ENCODE measurements at regions of chr21 and their contacts with region 1.

Region 1: GRCh38 chr21:37463083-37463801 is 96.7 kb downstream of the DYRK1A start:
- DNase-seq: peak; percentile 40 to 51 (median 47)
- H3K4me3 ChIP-seq: peak overlapping the region in 1 of 2 donors; percentile 8
- H3K4me3 Mint-ChIP-seq: peak overlapping the region; percentile 6 to 79 (median 56)
- H3K27ac ChIP-seq: no peak overlapping the region
- H3K27ac Mint-ChIP-seq: peak overlapping the region in 6 of 7 donors; percentile 60 to 94 (median 78)
- H3K4me1 ChIP-seq: peaks cover 65% of the 10 kb centered on the region
- H3K4me1 Mint-ChIP-seq: peaks cover 58 to 87% (median 74%) of the 10 kb centered on the region in 4 donors
- H3K27me3 ChIP-seq: no peaks in the 10 kb centered on the region
- H3K27me3 Mint-ChIP-seq: no peaks in the 10 kb centered on the region

Region 2: GRCh38 chr21:37220981-37221664 is 242.1 kb before region 1 on chr21:
- CTCF ChIA-PET with region 1: interaction called, 3 read pairs
- POLR2A ChIA-PET with region 1: no interaction called
- intact Hi-C with region 1: loop called (anchors 5 kb)
- DNase-seq: peak; percentile 86 to 95 (median 88)
- H3K4me3 ChIP-seq: peak overlapping the region; percentile 76 to 86
- H3K4me3 Mint-ChIP-seq: peak overlapping the region; percentile 79 to 96 (median 92)
- H3K27ac ChIP-seq: peak overlapping the region; percentile 75
- H3K27ac Mint-ChIP-seq: peak overlapping the region; percentile 80 to 96 (median 94)
- H3K4me1 ChIP-seq: peaks cover 45% of the 10 kb centered on the region
- H3K4me1 Mint-ChIP-seq: peaks cover 29 to 51% (median 36%) of the 10 kb centered on the region in 4 donors
- H3K27me3 ChIP-seq: no peaks in the 10 kb centered on the region
- H3K27me3 Mint-ChIP-seq: no peaks in the 10 kb centered on the region

Region 3: DNA sequence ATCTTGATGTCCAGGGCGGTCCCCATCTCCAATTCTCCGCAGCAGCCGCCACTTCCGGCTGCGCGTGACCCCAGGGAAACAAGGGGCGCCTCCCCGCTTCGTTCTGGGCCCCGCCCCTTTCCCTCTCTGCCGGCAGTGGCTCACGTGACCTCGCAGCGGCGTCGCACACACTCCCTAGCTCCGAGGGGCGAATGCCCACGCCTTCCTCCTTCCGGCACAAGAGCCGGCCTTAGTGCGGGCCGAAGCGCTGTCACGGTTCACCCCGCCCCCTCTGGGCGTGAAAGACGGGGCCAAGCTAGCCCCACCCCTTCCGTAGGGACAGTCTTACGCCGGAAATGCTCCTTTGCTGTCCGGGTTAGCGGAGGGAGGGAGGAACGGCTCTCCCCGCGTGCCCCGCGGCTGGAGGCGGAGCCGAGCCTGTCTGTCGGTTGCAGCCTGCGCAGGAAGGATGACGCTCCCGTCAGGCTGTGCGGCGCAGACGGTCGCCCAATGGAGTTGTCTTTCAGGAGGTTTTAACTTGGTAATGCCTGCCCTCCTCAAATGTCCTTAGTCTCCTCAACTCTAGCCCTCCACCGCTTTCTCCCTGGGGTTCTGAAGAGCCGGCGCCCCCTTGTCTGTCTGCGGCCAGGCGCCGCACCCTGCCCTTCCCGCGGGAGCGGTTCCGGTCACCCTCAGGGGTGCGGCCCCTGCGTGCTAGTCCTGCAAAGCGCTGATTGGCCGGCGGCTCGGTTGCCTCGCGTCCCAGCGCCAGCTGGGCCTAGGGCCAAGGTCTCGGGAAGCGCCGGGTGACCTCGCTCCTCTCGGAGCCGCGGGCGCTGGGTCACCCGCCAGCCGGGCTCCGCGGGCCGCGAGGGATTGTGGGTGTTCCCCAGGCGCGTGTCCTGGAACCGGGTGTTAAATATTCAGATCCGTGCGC is 195.7 kb before region 1 on chr21 and contains the start of gene VPS26C:
- CTCF ChIA-PET with region 1: no interaction called
- POLR2A ChIA-PET with region 1: interaction called, 4 read pairs
- intact Hi-C with region 1: loop called (anchors 5 kb)
- DNase-seq: peak; percentile 97 to 99 (median 99)
- H3K4me3 ChIP-seq: peak within 1 kb of the TSS; percentile 80 to 83
- H3K4me3 Mint-ChIP-seq: peak within 1 kb of the TSS; percentile 92 to 96 (median 94)
- H3K27ac ChIP-seq: peak within 1 kb of the TSS; percentile 92
- H3K27ac Mint-ChIP-seq: peak within 1 kb of the TSS; percentile 97 to 99 (median 98)
- H3K4me1 ChIP-seq: peaks cover 43% of the 10 kb centered on the region
- H3K4me1 Mint-ChIP-seq: peaks cover 33 to 64% (median 44%) of the 10 kb centered on the region in 4 donors
- H3K27me3 ChIP-seq: no peaks in the 10 kb centered on the region
- H3K27me3 Mint-ChIP-seq: peaks cover 0 to 4% of the 10 kb centered on the region in 2 donors
- total RNA-seq, gene VPS26C: 76.0 to 79.7 TPM

Region 4: DNA sequence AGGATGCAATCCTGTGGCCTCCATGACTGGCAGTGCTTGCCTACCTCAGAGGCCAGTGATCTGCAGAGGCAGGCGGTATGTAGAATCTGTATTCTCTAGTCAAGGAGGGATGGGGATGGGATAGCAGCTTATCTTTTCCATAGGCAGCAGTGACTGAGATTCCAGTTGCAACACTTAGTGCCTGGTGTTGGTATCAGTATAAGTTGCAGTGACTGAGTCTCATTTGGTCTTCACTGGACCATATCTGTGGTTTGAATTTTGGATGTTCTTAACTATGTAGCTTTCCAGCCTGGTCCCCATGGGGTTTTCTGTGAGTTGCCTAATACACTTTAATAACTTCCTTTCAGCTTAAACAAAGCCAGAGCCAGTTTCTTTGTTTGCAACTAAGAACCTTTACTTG is 80.2 kb before region 1 on chr21:
- CTCF ChIA-PET with region 1: interaction called, 12 read pairs
- POLR2A ChIA-PET with region 1: no interaction called
- intact Hi-C with region 1: no loop called
- DNase-seq: no peak
- H3K4me3 ChIP-seq: no peak overlapping the region
- H3K4me3 Mint-ChIP-seq: peak overlapping the region in 5 of 8 donors; percentile 21 to 63 (median 35)
- H3K27ac ChIP-seq: no peak overlapping the region
- H3K27ac Mint-ChIP-seq: peak overlapping the region in 2 of 7 donors; percentile 43 to 70
- H3K4me1 ChIP-seq: peaks cover 96% of the 10 kb centered on the region
- H3K4me1 Mint-ChIP-seq: peaks cover 70 to 100% (median 84%) of the 10 kb centered on the region in 4 donors
- H3K27me3 ChIP-seq: no peaks in the 10 kb centered on the region
- H3K27me3 Mint-ChIP-seq: no peaks in the 10 kb centered on the region

Region 5: DNA sequence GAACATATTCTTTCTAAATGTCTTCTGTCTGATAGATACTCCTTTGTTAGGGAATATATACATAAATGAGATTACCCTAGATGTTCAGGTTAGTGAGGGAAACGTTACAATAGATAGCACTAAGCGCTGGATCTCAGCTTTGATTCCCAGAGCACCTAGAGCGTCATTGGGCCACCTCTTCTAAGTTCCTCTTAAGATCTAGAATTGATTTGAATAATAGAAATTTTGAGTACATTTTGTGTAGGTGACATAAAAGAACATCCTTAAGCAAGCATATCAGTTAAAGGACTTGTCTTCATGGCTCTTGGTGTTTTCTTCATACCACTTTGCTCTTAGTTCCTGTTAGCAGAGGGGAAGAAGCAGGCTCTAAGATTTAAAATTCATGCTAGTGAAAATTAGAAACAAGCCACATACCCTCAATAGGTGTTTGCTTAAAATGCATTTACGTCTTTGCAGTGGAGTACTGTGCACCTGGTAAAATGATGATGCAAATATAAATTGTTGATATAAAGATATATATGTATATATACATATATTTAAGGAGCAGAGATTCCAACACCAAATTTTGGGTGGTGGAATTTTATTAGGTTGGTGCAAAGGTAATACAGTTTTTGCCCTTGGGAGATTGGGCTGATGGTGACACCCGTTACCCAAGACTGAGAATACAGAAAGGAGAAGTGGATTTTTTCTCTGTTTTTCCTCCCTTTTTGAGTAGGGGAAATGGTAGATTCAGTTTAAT is 49.5 kb before region 1 on chr21:
- CTCF ChIA-PET with region 1: no interaction called
- POLR2A ChIA-PET with region 1: interaction called, 3 read pairs
- intact Hi-C with region 1: loop called (anchors 5 kb)
- DNase-seq: no peak
- H3K4me3 ChIP-seq: no peak overlapping the region
- H3K4me3 Mint-ChIP-seq: peak overlapping the region in 4 of 8 donors; percentile 20 to 71 (median 56)
- H3K27ac ChIP-seq: no peak overlapping the region
- H3K27ac Mint-ChIP-seq: peak overlapping the region in 5 of 7 donors; percentile 18 to 65 (median 45)
- H3K4me1 ChIP-seq: peaks cover 86% of the 10 kb centered on the region
- H3K4me1 Mint-ChIP-seq: peaks cover 68 to 89% (median 78%) of the 10 kb centered on the region in 4 donors
- H3K27me3 ChIP-seq: no peaks in the 10 kb centered on the region
- H3K27me3 Mint-ChIP-seq: no peaks in the 10 kb centered on the region

Region 6: GRCh38 chr21:37475186-37475868 is 12.1 kb after region 1 on chr21:
- CTCF ChIA-PET with region 1: interaction called, 25 read pairs
- POLR2A ChIA-PET with region 1: interaction called, 6 read pairs
- intact Hi-C with region 1: no loop called
- DNase-seq: no peak
- H3K4me3 ChIP-seq: no peak overlapping the region
- H3K4me3 Mint-ChIP-seq: peak overlapping the region in 3 of 8 donors; percentile 1 to 27 (median 4)
- H3K27ac ChIP-seq: no peak overlapping the region
- H3K27ac Mint-ChIP-seq: peak overlapping the region in 6 of 7 donors; percentile 1 to 61 (median 38)
- H3K4me1 ChIP-seq: peaks cover 62% of the 10 kb centered on the region
- H3K4me1 Mint-ChIP-seq: peaks cover 54 to 71% (median 62%) of the 10 kb centered on the region in 4 donors
- H3K27me3 ChIP-seq: no peaks in the 10 kb centered on the region
- H3K27me3 Mint-ChIP-seq: no peaks in the 10 kb centered on the region

Region 7: GRCh38 chr21:37642493-37642892 is 179.3 kb after region 1 on chr21:
- CTCF ChIA-PET with region 1: no interaction called
- POLR2A ChIA-PET with region 1: no interaction called
- intact Hi-C with region 1: loop called (anchors 5 kb)
- DNase-seq: peak in 4 of 5 donors; percentile 12 to 32 (median 18)
- H3K4me3 ChIP-seq: no peak overlapping the region
- H3K4me3 Mint-ChIP-seq: no peak overlapping the region
- H3K27ac ChIP-seq: no peak overlapping the region
- H3K27ac Mint-ChIP-seq: peak overlapping the region in 1 of 7 donors; percentile 44
- H3K4me1 ChIP-seq: no peaks in the 10 kb centered on the region
- H3K4me1 Mint-ChIP-seq: peaks cover 0 to 9% (median 1%) of the 10 kb centered on the region in 4 donors
- H3K27me3 ChIP-seq: no peaks in the 10 kb centered on the region
- H3K27me3 Mint-ChIP-seq: peaks cover 24 to 46% of the 10 kb centered on the region in 2 donors

Region 8: DNA sequence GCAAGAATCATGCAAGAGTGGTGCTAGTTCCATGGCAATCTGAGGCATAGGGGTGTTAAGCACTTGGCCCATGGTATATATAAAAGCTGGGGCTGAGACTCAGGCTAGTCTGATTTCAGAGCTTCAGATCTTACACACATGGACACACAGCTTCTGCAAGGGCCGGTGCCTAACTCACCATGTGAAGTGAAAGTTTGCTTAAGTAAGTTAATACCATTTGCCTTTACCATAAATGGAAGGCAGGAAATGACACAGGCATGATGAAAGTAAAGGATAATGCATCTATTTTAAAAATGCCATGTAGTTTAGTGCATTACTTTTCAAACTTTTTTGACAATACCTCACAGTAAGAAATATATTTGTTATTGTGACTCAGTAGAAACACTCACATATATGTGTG is 330.4 kb after region 1 on chr21:
- CTCF ChIA-PET with region 1: no interaction called
- POLR2A ChIA-PET with region 1: no interaction called
- intact Hi-C with region 1: no loop called
- DNase-seq: no peak
- H3K4me3 ChIP-seq: no peak overlapping the region
- H3K4me3 Mint-ChIP-seq: no peak overlapping the region
- H3K27ac ChIP-seq: no peak overlapping the region
- H3K27ac Mint-ChIP-seq: no peak overlapping the region
- H3K4me1 ChIP-seq: no peaks in the 10 kb centered on the region
- H3K4me1 Mint-ChIP-seq: no peaks in the 10 kb centered on the region
- H3K27me3 ChIP-seq: no peaks in the 10 kb centered on the region
- H3K27me3 Mint-ChIP-seq: peaks cover 0 to 5% of the 10 kb centered on the region in 2 donors